HEK293 (cell line): ENCODE measurements at regions of chr2 and their contacts with region 1.

Region 1: GRCh38 chr2:27703638-27704341 is 40.1 kb downstream of the SLC4A1AP start:
- H3K4me3 ChIP-seq: no peak overlapping the region
- H3K27ac ChIP-seq: no peak overlapping the region
- H3K4me1 ChIP-seq: peaks cover 6% of the 10 kb centered on the region
- CTCF ChIP-seq: peak; percentile 72

Region 2: GRCh38 chr2:27689424-27689823 is 14.4 kb before region 1 on chr2:
- CTCF ChIA-PET with region 1: interaction called, 66 read pairs
- POLR2A ChIA-PET with region 1: no interaction called
- H3K4me3 ChIP-seq: no peak overlapping the region
- H3K27ac ChIP-seq: no peak overlapping the region
- H3K4me1 ChIP-seq: no peaks in the 10 kb centered on the region
- CTCF ChIP-seq: no peak

Region 3: GRCh38 chr2:27723372-27724144 is 19.8 kb after region 1 on chr2:
- CTCF ChIA-PET with region 1: interaction called, 45 read pairs
- POLR2A ChIA-PET with region 1: interaction called, 5 read pairs
- H3K4me3 ChIP-seq: no peak overlapping the region
- H3K27ac ChIP-seq: no peak overlapping the region
- H3K4me1 ChIP-seq: no peaks in the 10 kb centered on the region
- CTCF ChIP-seq: 0 out of 2 replicates have a peak, but pooled peaks have one; percentile 25

Region 4: GRCh38 chr2:27754138-27754588 is 50.4 kb after region 1 on chr2:
- CTCF ChIA-PET with region 1: interaction called, 24 read pairs
- POLR2A ChIA-PET with region 1: no interaction called
- H3K4me3 ChIP-seq: no peak overlapping the region
- H3K27ac ChIP-seq: no peak overlapping the region
- H3K4me1 ChIP-seq: no peaks in the 10 kb centered on the region
- CTCF ChIP-seq: peak; percentile 84

Region 5: DNA sequence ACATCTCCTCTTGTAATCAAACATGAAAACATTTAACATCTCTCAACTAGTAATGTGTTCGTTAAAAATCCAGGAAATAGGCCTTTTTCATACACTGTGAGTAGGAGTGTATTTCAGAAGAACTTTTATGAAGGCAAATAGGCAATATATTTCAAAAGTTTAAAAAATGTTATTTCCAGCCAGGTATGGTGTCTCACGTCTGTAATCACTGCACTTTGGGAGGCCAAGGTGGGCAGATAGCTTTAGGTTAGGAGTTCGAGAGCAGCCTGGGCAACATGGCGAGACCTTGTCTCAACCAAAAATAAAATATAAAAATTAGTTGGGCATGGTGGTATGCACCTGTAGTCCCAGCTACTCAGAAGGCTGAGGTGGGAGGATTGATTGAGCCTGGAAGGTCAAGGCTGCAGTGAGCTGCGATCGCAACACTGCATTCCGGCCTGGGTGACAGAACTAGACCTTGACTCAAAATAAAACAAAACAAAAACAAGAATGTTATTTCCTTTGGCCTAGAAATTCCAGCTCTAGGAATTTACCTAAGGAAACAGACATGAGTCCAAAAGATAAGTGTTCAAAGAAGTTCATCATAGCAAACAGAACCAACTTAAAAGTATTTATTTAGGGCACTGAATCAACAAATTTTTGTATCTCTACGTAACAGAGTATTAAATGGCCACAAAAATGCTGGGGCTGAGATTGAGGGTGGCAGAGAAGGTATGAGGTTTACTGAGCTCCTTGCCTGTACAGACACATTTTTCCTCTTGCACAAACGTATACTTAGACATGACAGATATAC is 171.5 kb after region 1 on chr2:
- CTCF ChIA-PET with region 1: no interaction called
- POLR2A ChIA-PET with region 1: no interaction called
- H3K4me3 ChIP-seq: no peak overlapping the region
- H3K27ac ChIP-seq: no peak overlapping the region
- H3K4me1 ChIP-seq: no peaks in the 10 kb centered on the region
- CTCF ChIP-seq: no peak